ENCODE measurements at regions of chr5 and their contacts with region 1.

Region 1: DNA sequence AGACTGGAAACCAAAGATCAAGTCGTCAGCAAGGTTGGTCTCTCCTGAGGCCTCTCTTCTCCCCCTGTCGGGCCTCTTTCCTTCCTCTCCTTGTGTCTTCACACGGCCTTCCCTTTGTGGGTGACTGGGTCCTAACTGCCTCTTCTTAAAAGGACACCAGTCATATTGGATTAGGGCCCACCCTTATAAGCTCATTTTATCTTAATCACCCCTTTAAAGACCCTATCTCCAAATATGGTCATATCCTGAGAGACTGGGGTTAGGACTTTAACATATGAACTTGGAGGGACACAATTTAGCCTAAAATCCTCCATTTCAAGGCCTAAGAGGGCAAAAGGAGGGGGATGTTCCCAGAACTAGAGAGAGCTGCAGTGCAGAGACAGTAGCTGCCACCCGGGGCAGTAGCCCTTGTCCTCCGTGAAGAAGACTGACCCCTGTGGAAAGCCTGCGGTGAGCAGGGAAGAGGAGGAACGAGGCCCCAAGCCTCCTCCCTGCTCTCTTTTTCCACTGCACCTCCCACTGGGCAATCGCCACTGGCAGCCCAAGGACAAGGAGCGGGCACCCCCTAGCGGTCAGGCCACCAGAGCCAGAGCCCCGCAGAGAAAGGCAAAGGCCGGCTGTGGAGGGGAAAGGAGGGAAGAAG is 34.9 kb downstream of the CFAP90 start:
- DNase-seq: peak; percentile 86 to 90 (median 86)
- ATAC-seq: peak; percentile 99
- H3K4me3 ChIP-seq: no peak overlapping the region
- H3K27ac ChIP-seq: no peak overlapping the region
- H3K4me1 ChIP-seq: peaks cover 2 to 4% of the 10 kb centered on the region in 2 experiments; a peak in 1 of 5 replicates
- H3K27me3 ChIP-seq: peaks cover 15 to 38% of the 10 kb centered on the region in 2 experiments
- CTCF ChIP-seq: peak; percentile 95 to 98 (median 98)
- EP300 ChIP-seq: no peak
- POLR2A ChIP-seq: no peak
- RAD21 ChIP-seq: peak; percentile 71 to 87

Region 2: GRCh38 chr5:6765612-6766525 is 1050.1 kb before region 1 on chr5:
- CTCF ChIA-PET with region 1: no interaction called
- POLR2A ChIA-PET with region 1: no interaction called
- in situ Hi-C with region 1: no loop called
- intact Hi-C with region 1: loop called (anchors 5 kb)
- DNase-seq: peak; percentile 81 to 86 (median 84)
- ATAC-seq: peak; percentile 93
- H3K4me3 ChIP-seq: no peak overlapping the region
- H3K27ac ChIP-seq: no peak overlapping the region
- H3K4me1 ChIP-seq: peaks cover 0 to 14% of the 10 kb centered on the region in 2 experiments; a peak in 2 of 5 replicates
- H3K27me3 ChIP-seq: peaks cover 17 to 48% of the 10 kb centered on the region in 2 experiments; a peak in 4 of 5 replicates
- CTCF ChIP-seq: peak; percentile 89 to 92 (median 91)
- EP300 ChIP-seq: no peak
- POLR2A ChIP-seq: no peak
- RAD21 ChIP-seq: peak; percentile 44 to 83

Region 3: GRCh38 chr5:7261049-7261448 is 555.0 kb before region 1 on chr5:
- CTCF ChIA-PET with region 1: interaction called, 7 read pairs
- POLR2A ChIA-PET with region 1: no interaction called
- in situ Hi-C with region 1: no loop called
- intact Hi-C with region 1: loop called (anchors 1 kb)
- DNase-seq: peak; percentile 18 to 49 (median 20)
- ATAC-seq: peak; percentile 68
- H3K4me3 ChIP-seq: no peak overlapping the region
- H3K27ac ChIP-seq: no peak overlapping the region
- H3K4me1 ChIP-seq: no peaks in the 10 kb centered on the region
- H3K27me3 ChIP-seq: no peaks in the 10 kb centered on the region
- CTCF ChIP-seq: peak; percentile 48 to 71 (median 63)
- EP300 ChIP-seq: no peak
- POLR2A ChIP-seq: no peak
- RAD21 ChIP-seq: peak; percentile 68 to 81

Region 4: DNA sequence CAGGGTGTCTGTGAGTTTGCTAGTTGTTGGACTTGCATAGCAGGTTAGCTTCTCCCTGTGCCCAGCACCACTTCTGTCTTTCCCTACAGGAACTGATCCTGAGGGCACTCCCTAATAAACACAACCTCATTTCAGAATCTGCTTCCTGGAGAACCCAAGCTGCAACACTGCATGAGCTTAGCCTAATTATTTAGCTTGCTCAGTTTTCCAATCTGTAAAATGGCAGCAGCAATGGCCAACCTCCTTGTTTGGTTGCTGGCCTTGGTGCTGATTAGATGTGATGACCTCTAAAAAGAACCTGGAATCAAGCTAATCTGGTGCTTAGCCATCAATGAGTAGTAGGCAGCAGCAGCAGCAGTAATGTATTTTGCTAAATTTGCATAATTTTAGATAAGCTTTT is 286.1 kb before region 1 on chr5:
- CTCF ChIA-PET with region 1: no interaction called
- POLR2A ChIA-PET with region 1: no interaction called
- in situ Hi-C with region 1: no loop called
- intact Hi-C with region 1: no loop called
- DNase-seq: no peak
- ATAC-seq: no peak
- H3K4me3 ChIP-seq: no peak overlapping the region
- H3K27ac ChIP-seq: no peak overlapping the region
- H3K4me1 ChIP-seq: no peaks in the 10 kb centered on the region
- H3K27me3 ChIP-seq: no peaks in the 10 kb centered on the region
- CTCF ChIP-seq: no peak
- EP300 ChIP-seq: no peak
- POLR2A ChIP-seq: no peak
- RAD21 ChIP-seq: no peak

Region 5: DNA sequence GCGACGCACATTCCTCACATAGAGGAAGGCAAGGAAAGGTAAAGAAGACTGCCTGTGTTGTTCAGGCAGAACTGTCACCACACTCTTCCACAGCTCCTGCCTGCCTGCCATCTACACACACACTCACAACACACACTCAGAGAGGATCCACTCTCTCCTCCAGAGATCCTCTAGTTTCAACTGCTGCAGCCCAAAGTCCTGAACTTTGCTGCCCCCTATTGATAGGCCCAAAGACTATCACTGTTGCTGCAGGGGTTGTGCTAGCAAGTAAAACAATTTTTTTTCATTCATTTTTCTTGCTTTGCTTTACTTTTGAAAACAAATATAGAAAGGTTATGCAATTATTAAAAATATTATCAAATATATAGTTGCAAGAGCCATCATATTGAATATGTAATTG is 40.8 kb after region 1 on chr5:
- CTCF ChIA-PET with region 1: interaction called, 3 read pairs
- POLR2A ChIA-PET with region 1: interaction called, 3 read pairs
- in situ Hi-C with region 1: no loop called
- intact Hi-C with region 1: loop called (anchors 5 kb)
- DNase-seq: peak; percentile 34 to 67 (median 52)
- ATAC-seq: peak; percentile 94
- H3K4me3 ChIP-seq: no peak overlapping the region
- H3K27ac ChIP-seq: no peak overlapping the region
- H3K4me1 ChIP-seq: peaks cover 0 to 10% of the 10 kb centered on the region in 2 experiments; a peak in 4 of 5 replicates
- H3K27me3 ChIP-seq: no peaks in the 10 kb centered on the region
- CTCF ChIP-seq: peak; percentile 65 to 82 (median 78); a peak in 5 of 6 replicates
- EP300 ChIP-seq: no peak
- POLR2A ChIP-seq: no peak
- RAD21 ChIP-seq: peak; percentile 46 to 70

Region 6: DNA sequence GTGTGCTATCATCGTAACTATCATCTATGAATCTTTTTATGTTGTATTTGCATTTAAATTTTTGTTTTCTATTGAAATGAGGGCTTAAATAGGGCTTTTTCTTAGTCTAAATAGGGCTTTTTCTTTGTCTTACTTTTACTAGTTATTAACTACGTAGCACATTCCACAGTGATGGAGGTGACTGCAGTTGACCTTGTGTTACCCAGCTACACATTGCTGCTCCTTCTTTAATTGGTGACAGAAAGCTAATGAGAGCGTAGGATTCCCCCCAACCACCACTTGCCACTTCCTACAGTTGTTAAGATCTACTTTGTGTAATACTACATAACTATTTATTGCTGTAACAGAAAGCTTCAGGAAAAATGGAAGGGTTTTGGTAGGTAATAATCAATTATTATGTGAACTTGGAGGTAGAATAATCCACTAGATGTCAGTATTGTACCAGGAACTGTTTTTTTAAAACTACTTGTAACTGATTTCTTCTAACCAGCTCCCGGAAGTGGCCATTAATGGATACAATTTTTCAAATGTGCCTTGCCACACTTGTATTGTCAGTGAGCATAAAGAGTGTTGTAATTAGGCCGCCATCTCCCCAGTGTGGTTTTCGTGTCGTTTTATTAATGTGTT is 70.9 kb after region 1 on chr5:
- CTCF ChIA-PET with region 1: no interaction called
- POLR2A ChIA-PET with region 1: no interaction called
- in situ Hi-C with region 1: no loop called
- intact Hi-C with region 1: no loop called
- DNase-seq: peak in 2 of 4 experiments; percentile 23 to 25
- ATAC-seq: peak; percentile 72
- H3K4me3 ChIP-seq: no peak overlapping the region
- H3K27ac ChIP-seq: no peak overlapping the region
- H3K4me1 ChIP-seq: no peaks in the 10 kb centered on the region
- H3K27me3 ChIP-seq: no peaks in the 10 kb centered on the region
- CTCF ChIP-seq: peak in 2 of 3 experiments; percentile 48 to 64; a peak in 3 of 6 replicates
- EP300 ChIP-seq: no peak
- POLR2A ChIP-seq: no peak
- RAD21 ChIP-seq: peak; percentile 35 to 56